AG04449 (cell line): ENCODE measurements at regions of chr13 and their contacts with region 1.

Region 1: DNA sequence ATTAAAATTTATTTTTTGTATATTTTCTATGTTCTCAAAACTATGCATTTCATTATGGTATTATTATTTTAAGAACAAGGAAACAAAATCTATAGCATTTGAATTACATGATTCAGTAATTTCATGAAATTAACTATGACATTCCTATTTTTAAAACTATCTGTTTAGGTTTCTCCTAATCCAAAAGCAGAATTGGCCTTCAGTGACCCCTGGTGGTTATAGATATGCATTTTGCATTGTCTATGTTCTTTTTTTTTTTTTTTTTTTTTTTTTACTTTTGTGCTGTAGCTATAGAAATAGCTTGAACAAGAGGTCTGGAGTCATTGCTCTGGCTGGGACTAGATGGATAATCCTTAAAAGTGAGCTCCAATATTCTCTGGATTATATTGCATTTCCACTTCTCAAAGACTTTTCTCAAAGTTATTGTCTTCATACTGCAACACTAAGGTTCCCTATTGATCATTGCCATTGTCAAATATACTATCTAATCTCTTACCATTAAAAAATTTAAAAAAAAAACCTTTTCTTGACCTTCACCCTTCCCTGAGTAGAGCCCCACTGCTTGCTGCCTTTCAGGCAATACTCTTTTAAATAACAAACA is 15.9 kb upstream of the DNAJC3 start:
- DNase-seq: no peak
- H3K4me3 ChIP-seq: no peak overlapping the region
- CTCF ChIP-seq: peak; percentile 43

Region 2: GRCh38 chr13:94878602-94879165 is 782.4 kb before region 1 on chr13:
- CTCF ChIA-PET with region 1: no interaction called
- POLR2A ChIA-PET with region 1: no interaction called
- DNase-seq: no peak
- H3K4me3 ChIP-seq: no peak overlapping the region
- CTCF ChIP-seq: no peak

Region 3: DNA sequence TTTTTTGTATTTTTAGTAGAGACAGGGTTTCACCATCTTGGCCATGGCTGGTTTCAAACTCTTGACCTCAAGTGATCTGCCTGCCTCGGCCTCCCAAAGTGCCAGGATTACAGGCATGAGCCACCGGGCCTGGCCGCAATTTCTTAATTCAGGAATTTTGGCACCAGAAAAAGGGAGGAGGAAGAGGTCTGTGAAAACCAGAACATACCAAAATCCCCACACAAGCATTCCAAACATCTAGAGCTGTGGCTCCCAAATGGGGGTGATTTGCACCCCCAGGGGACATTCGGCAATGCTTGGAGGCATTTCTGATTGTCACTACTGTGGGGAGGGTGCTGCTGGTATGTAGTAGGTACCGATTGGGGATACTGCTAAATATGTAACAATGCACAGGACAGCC is 319.6 kb before region 1 on chr13:
- CTCF ChIA-PET with region 1: no interaction called
- POLR2A ChIA-PET with region 1: no interaction called
- DNase-seq: no peak
- H3K4me3 ChIP-seq: no peak overlapping the region
- CTCF ChIP-seq: no peak

Region 4: DNA sequence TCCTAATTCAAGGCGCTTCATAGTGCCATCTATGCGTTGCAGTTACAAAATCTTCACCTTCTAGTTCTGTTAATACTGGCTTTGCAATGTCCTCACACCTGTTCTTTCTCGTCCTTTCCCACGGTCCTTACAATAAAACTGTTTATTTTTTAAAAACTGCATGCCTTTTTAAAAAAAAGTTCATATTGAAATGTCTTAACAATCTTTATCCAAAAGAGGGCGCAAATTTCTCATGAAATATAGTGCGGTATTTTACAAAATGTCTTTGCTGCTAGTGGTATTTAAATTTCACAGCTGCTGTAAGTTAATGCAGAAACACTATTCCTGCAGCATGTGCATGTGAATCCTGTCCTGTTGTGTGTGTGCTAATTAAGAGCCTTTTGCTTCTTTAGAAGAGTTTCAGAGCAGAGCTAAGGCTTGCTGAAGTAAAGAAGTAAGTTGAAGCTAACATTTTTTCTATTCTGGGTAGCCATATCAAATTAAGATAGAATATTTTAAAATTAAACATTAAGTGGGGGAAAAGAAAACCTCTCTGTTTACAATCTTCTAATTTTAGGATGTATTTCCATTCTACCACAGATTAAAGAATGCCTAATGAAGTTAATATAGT is 124.3 kb before region 1 on chr13:
- CTCF ChIA-PET with region 1: interaction called, 21 read pairs
- POLR2A ChIA-PET with region 1: no interaction called
- DNase-seq: no peak
- H3K4me3 ChIP-seq: no peak overlapping the region
- CTCF ChIP-seq: peak; percentile 4

Region 5: GRCh38 chr13:95624020-95624419 is 37.1 kb before region 1 on chr13:
- CTCF ChIA-PET with region 1: interaction called, 62 read pairs
- POLR2A ChIA-PET with region 1: interaction called, 3 read pairs
- DNase-seq: no peak
- H3K4me3 ChIP-seq: no peak overlapping the region
- CTCF ChIP-seq: peak; percentile 53

Region 6: GRCh38 chr13:95644601-95645052 is 16.5 kb before region 1 on chr13 and contains the start of gene DZIP1:
- CTCF ChIA-PET with region 1: interaction called, 11 read pairs
- POLR2A ChIA-PET with region 1: no interaction called
- DNase-seq: no peak
- H3K4me3 ChIP-seq: peak within 1 kb of the TSS; percentile 70
- CTCF ChIP-seq: no peak

Region 7: DNA sequence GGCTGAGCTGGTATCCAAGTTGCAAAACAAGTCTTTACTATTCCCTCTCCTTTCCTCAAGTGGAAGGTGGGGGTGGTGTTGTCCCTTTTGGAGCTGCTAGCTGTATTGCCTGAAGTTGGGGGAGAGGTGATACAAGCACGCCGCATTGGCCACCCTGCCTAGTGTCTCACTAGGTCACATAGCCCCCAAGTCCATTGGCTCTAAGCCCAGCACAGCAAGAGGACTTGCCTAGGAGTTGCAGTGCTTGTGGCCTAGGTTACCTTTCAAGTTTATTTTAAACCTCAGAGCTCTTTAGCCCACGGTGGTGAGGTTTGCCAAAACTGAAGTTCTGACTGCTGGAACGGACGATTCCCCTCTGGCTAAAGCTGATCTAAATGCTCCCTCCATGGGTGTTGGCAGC is 10.5 kb after region 1 on chr13:
- CTCF ChIA-PET with region 1: interaction called, 24 read pairs
- POLR2A ChIA-PET with region 1: interaction called, 5 read pairs
- DNase-seq: no peak
- H3K4me3 ChIP-seq: no peak overlapping the region
- CTCF ChIP-seq: no peak

Region 8: GRCh38 chr13:95982144-95982543 is 321.1 kb after region 1 on chr13:
- CTCF ChIA-PET with region 1: no interaction called
- POLR2A ChIA-PET with region 1: no interaction called
- DNase-seq: no peak
- H3K4me3 ChIP-seq: no peak overlapping the region
- CTCF ChIP-seq: no peak